Testis (tissue), 5 donors: ENCODE measurements at regions of chr11 and their contacts with region 1.

Region 1: GRCh38 chr11:123239191-123240150 is 44.4 kb upstream of the CLMP start:
- DNase-seq: no peak
- H3K4me3 ChIP-seq: no peak overlapping the region
- H3K27ac ChIP-seq: no peak overlapping the region
- H3K4me1 ChIP-seq: peaks cover 5% of the 10 kb centered on the region
- H3K27me3 ChIP-seq: no peaks in the 10 kb centered on the region
- CTCF ChIP-seq: no peak
- POLR2A ChIP-seq: no peak

Region 2: GRCh38 chr11:123107945-123108485 is 131.5 kb before region 1 on chr11:
- intact Hi-C with region 1: loop called (anchors 5 kb)
- DNase-seq: no peak
- H3K4me3 ChIP-seq: no peak overlapping the region
- H3K27ac ChIP-seq: no peak overlapping the region
- H3K4me1 ChIP-seq: peaks cover 9% of the 10 kb centered on the region
- H3K27me3 ChIP-seq: no peaks in the 10 kb centered on the region
- CTCF ChIP-seq: no peak
- POLR2A ChIP-seq: no peak

Region 3: DNA sequence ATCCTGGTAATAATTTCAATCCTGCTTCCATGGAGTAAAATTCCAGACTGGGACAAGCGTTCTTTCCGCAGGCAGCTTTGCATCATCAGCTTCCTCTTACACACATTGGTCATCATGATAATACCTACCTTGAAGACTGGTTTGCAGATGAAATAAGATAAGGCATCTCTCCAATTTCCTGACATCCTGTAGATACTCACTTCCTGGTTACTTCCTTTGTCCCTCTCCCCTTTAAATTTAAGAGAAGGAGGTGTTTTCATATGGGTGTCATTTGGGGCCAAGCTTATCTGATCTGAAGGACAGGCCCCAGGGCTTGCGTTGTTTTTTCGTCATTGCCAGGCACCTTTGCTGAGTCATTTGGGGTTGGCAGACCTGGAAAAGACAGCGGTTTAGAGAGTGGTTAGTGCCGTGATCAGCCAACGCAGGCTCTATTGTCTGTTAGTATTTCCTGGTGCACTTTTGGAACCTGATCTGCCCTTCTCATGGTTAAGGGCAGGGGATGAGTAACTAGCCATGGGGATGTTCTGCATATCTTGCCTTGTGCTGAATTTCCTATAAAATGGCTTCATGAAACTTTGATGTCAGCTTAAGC is 214.7 kb after region 1 on chr11:
- intact Hi-C with region 1: no loop called
- DNase-seq: no peak
- H3K4me3 ChIP-seq: no peak overlapping the region
- H3K27ac ChIP-seq: no peak overlapping the region
- H3K4me1 ChIP-seq: peaks cover 9% of the 10 kb centered on the region
- H3K27me3 ChIP-seq: no peaks in the 10 kb centered on the region
- CTCF ChIP-seq: no peak
- POLR2A ChIP-seq: no peak

Region 4: GRCh38 chr11:123494195-123495050 is 255.0 kb after region 1 on chr11:
- intact Hi-C with region 1: no loop called
- DNase-seq: no peak
- H3K4me3 ChIP-seq: no peak overlapping the region
- H3K27ac ChIP-seq: no peak overlapping the region
- H3K4me1 ChIP-seq: no peaks in the 10 kb centered on the region
- H3K27me3 ChIP-seq: no peaks in the 10 kb centered on the region
- CTCF ChIP-seq: no peak
- POLR2A ChIP-seq: no peak